Posterior vena cava (tissue), 2 donors: ENCODE measurements at regions of chr20 and their contacts with region 1.

Region 1: GRCh38 chr20:42656130-42656529 is 533.6 kb downstream of the PTPRT start:
- DNase-seq: no peak

Region 2: DNA sequence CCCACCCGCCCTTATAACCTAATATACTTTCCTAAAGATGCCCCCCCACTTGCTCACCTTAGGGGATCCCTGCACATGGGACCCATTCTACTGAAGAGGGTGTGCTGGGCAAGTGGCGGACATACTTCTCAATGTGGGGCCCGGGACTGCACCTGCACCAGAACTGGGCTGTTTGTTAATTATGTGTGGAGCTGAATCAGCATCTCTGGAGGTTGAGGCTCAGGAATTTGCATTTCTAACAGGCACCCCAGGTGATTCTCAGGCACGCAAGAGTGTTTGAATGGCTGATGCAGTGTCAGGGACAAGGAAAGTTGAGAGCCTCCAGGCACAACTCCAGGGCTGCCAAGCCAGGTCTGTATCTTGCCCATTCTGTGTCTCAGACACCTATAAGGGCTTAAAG is 542.5 kb after region 1 on chr20:
- intact Hi-C with region 1: loop called in 1 of 2 experiments (anchors 5 kb)
- DNase-seq: no peak

Region 3: DNA sequence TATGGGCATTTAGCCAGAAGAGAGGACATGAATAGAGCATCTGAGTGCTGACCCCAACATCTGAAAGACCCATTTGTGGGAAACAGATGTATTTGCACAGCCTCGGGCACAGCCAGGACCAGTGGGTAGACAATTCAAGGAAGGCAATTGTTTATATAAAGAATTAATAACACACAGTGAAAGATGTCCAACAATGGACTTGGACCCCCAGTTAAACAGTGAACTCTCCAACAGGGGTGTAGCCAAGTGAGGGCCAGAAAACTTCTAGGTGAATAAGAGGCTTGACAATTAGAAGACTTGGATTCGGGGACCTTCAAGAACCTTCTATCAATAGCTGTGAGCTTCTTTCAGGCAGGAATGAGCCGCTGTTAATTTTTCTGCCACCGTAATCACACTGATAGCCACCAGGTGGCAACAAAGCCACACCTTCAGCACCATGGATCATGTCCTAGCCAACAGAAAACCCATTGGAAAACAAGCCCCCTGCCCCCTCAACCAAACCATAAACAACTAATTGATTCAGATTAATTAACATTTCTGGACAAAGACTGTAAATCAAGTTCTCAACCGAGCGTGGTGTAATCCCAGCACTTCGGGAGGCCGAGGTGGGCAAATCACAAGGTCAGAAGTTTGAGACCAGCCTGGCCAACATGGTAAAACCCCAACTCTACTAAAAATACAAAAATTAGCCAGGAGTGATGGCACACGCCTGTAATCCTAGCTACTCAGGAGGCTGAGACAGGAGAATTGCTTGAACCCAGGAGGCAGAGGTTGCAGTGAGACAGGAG is 792.8 kb after region 1 on chr20:
- intact Hi-C with region 1: no loop called
- DNase-seq: no peak